ENCODE measurements at regions of chr11 and their contacts with region 1.

Region 1: GRCh38 chr11:74988541-74989260 is at the start of gene NEU3:
- DNase-seq: peak; percentile 83
- H3K4me3 Mint-ChIP-seq: peak within 1 kb of the TSS; percentile 93
- H3K27ac Mint-ChIP-seq: peak within 1 kb of the TSS; percentile 90
- H3K4me1 Mint-ChIP-seq: peaks cover 15% of the 10 kb centered on the region
- H3K27me3 Mint-ChIP-seq: no peaks in the 10 kb centered on the region
- CTCF ChIP-seq: no peak
- total RNA-seq, gene NEU3: 8.7 and 10.0 TPM in 2 replicates

Region 2: DNA sequence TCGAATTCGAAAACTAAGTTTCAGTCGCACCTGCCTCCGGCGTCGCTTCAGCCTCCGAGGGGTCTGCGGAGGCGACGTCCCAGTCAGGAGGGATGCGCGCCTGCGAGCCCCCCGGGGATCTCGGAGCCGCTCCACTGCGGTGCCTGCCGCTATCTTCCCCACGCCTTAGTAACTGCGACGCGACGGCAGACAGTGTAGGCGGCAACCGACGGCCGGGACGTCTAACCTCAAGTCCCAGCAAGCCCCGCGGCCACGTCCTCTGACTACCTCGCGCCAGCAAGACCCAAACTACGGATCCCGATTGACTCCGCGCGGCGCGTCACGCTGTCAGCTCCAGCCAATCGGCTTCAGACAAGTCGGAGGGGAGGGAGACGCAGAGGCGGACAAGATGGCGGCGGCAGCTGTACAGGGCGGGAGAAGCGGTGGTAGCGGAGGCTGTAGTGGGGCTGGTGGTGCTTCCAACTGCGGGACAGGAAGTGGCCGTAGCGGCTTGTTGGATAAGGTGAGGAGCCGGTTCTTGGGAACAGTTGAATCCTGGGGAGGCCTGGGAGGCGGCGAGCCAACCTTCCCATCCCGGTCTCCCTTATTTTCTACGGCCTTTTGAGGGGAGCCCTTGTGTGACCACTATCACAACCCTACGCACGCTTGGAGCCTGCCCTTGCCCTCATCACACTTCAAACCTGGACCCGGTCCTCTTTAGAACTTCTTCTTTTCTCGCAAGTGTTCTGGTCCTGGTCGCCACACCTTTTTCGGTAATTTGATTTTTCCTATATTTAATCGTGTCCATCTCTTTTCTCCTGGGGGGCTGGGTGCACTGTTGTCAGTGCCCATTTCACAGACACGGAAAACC is 39.6 kb before region 1 on chr11 and contains the starts of genes SPCS2 and XRRA1:
- CTCF ChIA-PET with region 1: no interaction called
- POLR2A ChIA-PET with region 1: interaction called, 14 read pairs
- intact Hi-C with region 1: loop called (anchors 5 kb)
- DNase-seq: peak; percentile 98
- H3K4me3 Mint-ChIP-seq: peak within 1 kb of the TSS; percentile 96
- H3K27ac Mint-ChIP-seq: peak within 1 kb of the TSS; percentile 93
- H3K4me1 Mint-ChIP-seq: peaks cover 35% of the 10 kb centered on the region
- H3K27me3 Mint-ChIP-seq: no peaks in the 10 kb centered on the region
- CTCF ChIP-seq: no peak
- total RNA-seq, gene SPCS2: 198 and 217 TPM in 2 replicates
- total RNA-seq, gene XRRA1: 49.3 and 49.6 TPM in 2 replicates

Region 3: DNA sequence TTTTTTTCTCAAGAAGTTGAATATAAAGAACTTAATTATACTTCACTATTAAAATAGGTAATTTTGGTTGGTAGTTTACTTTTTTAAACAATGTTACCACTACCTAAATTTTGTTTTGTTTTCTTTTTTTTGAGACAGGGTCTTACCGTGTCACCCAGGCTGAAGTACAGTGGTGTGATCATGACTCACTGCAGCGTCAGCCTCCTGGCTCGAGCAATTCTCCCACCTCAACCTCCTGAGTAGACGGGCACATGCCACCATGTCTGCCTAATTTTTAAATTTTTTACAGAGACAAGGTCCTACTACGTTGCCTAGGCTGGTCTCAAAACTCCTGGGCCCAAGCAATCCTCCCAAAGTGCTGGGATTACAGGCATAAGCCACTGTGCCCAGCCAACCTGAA is 22.1 kb before region 1 on chr11:
- CTCF ChIA-PET with region 1: no interaction called
- POLR2A ChIA-PET with region 1: interaction called, 10 read pairs
- intact Hi-C with region 1: no loop called
- DNase-seq: peak; percentile 61
- H3K4me3 Mint-ChIP-seq: no peak overlapping the region
- H3K27ac Mint-ChIP-seq: peak overlapping the region; percentile 73
- H3K4me1 Mint-ChIP-seq: peaks cover 18% of the 10 kb centered on the region
- H3K27me3 Mint-ChIP-seq: no peaks in the 10 kb centered on the region
- CTCF ChIP-seq: no peak

Region 4: DNA sequence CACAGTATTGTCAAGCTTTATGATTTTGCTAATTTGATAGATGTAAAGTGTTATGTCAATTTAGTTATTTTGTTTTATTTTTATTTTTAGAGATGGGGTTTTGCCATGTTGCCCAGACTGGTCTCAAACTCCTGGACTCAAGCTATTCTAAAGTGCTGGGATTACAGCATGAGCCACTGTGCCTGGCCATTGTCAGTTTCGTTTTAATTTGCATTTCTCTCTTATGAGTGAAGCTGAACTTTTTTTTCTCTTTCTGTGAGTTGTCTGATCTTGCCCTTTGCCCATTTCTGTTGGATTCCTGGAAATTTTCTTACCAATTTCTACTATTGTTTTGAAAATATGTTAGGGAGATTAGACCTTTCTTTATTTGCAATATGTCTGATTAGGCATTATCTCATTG is 15.5 kb after region 1 on chr11:
- CTCF ChIA-PET with region 1: interaction called, 3 read pairs
- POLR2A ChIA-PET with region 1: interaction called, 12 read pairs
- intact Hi-C with region 1: no loop called
- DNase-seq: no peak
- H3K4me3 Mint-ChIP-seq: no peak overlapping the region
- H3K27ac Mint-ChIP-seq: no peak overlapping the region
- H3K4me1 Mint-ChIP-seq: no peaks in the 10 kb centered on the region
- H3K27me3 Mint-ChIP-seq: no peaks in the 10 kb centered on the region
- CTCF ChIP-seq: no peak